Mammary epithelial cell (primary cell): ENCODE measurements at regions of chr1 and their contacts with region 1.

Region 1: DNA sequence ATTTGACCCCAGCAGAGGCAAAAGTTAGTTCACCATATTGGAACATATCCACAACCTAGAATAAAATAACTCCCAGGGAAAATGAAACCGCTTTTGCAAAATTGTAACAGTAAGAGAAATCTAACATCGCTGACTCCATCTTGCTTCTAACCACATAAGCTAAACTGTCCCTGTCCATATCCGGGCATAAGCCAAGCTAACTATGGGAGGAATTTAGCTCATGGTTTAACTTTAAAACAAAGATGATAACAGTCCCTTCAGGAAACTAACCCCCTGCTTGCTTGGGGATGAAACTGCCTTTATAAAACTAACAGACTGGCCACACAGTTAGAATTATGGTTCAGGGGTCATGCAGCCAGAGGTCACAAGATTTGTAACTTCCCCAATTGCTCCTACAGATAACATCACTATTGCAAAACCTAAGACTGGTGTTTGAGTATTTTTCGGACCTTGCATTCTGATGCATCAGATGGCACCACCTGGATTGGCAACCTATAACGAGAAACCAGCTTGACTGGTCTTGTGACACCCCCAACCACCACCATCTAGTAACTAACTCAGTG is 46.3 kb downstream of the TESK2 start:
- DNase-seq: peak; percentile 13
- H3K4me3 ChIP-seq: no peak overlapping the region
- H3K27ac ChIP-seq: no peak overlapping the region
- H3K4me1 ChIP-seq: no peaks in the 10 kb centered on the region
- H3K27me3 ChIP-seq: no peaks in the 10 kb centered on the region
- CTCF ChIP-seq: no peak

Region 2: GRCh38 chr1:45359882-45360513 is 84.7 kb before region 1 on chr1:
- CTCF ChIA-PET with region 1: no interaction called
- dilution Hi-C with region 1: loop called (anchors 5 kb)
- in situ Hi-C with region 1: no loop called
- intact Hi-C with region 1: no loop called
- DNase-seq: peak; percentile 47
- H3K4me3 ChIP-seq: no peak overlapping the region
- H3K27ac ChIP-seq: peak overlapping the region; percentile 32
- H3K4me1 ChIP-seq: peaks cover 13% of the 10 kb centered on the region
- H3K27me3 ChIP-seq: no peaks in the 10 kb centered on the region
- CTCF ChIP-seq: peak; percentile 55 to 59